SK-N-SH (cell line): ENCODE measurements at regions of chr1 and their contacts with region 1.

Region 1: GRCh38 chr1:203486618-203487370 is 7.2 kb upstream of the OPTC start:
- DNase-seq: no peak
- H3K4me3 ChIP-seq: no peak overlapping the region; a peak in 1 of 4 replicates
- H3K27ac ChIP-seq: peak overlapping the region in 1 of 2 experiments; percentile 83; a peak in 2 of 4 replicates
- H3K4me1 ChIP-seq: peaks cover 0 to 11% of the 10 kb centered on the region in 2 experiments; a peak in 1 of 4 replicates
- H3K27me3 ChIP-seq: no peaks in the 10 kb centered on the region
- CTCF ChIP-seq: no peak
- EP300 ChIP-seq: no peak
- RAD21 ChIP-seq: no peak

Region 2: DNA sequence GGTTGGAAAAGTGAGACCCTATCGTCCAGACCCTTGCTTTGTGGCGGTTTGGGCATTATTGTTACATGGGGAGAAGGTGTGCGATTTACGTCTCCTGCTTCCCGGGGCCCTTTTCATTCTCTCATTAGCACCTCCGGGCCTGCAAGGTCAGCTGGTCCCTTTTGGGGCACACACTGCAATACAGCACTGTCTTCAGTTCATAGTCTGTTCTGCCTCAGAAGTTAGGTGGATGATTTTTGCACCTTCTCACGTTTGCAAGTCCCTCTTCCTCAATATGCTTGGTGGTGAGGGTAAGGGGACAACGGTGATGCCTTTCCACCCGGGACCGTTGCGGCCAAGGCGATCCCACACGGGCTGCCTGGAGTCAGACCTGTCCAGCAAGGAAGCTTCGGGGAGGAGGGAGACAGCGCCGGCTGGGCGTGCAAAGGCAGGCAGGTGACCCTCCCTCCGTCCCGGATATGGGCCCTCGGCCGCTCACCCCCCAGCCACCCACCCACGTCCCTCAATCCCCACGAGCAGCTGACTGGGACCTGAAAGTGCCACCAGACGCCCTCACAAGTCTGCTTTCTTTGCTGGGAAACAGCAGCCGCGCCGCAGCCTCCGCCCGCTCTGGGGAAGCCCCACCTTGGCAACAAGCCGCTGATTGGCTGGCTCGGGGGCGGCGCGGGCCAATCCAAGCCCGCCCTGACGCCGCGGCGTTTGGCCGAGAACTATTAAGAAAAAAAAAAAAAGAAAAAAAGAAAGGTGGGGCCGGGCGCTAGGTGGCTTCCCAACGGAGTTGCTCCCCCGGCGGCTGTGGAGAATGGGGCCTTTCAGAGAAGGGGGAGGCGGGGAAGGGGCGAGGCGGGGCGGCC is 159.7 kb before region 1 on chr1:
- CTCF ChIA-PET with region 1: interaction called, 18 read pairs
- POLR2A ChIA-PET with region 1: no interaction called
- DNase-seq: peak; percentile 97
- H3K4me3 ChIP-seq: peak overlapping the region; percentile 51 to 71
- H3K27ac ChIP-seq: peak overlapping the region in 1 of 2 experiments; percentile 96; a peak in 2 of 4 replicates
- H3K4me1 ChIP-seq: peaks cover 5 to 43% of the 10 kb centered on the region in 2 experiments; a peak in 2 of 4 replicates
- H3K27me3 ChIP-seq: peaks cover 26% of the 10 kb centered on the region
- CTCF ChIP-seq: no peak
- EP300 ChIP-seq: peak; percentile 29 to 92; a peak in 3 of 4 replicates
- RAD21 ChIP-seq: no peak

Region 3: GRCh38 chr1:203451836-203452784 is 34.7 kb before region 1 on chr1:
- CTCF ChIA-PET with region 1: no interaction called
- POLR2A ChIA-PET with region 1: no interaction called
- DNase-seq: peak; percentile 48
- H3K4me3 ChIP-seq: no peak overlapping the region
- H3K27ac ChIP-seq: no peak overlapping the region
- H3K4me1 ChIP-seq: peaks cover 0 to 16% of the 10 kb centered on the region in 2 experiments; a peak in 3 of 4 replicates
- H3K27me3 ChIP-seq: peaks cover 8% of the 10 kb centered on the region; the same call in 1 of the 2 replicates
- CTCF ChIP-seq: no peak
- EP300 ChIP-seq: no peak
- RAD21 ChIP-seq: no peak

Region 4: GRCh38 chr1:203465948-203466347 is 20.8 kb before region 1 on chr1:
- CTCF ChIA-PET with region 1: interaction called, 10 read pairs
- POLR2A ChIA-PET with region 1: no interaction called
- DNase-seq: no peak
- H3K4me3 ChIP-seq: no peak overlapping the region
- H3K27ac ChIP-seq: no peak overlapping the region
- H3K4me1 ChIP-seq: peaks cover 3 to 8% of the 10 kb centered on the region in 2 experiments; a peak in 2 of 4 replicates
- H3K27me3 ChIP-seq: no peaks in the 10 kb centered on the region
- CTCF ChIP-seq: no peak
- EP300 ChIP-seq: no peak
- RAD21 ChIP-seq: no peak

Region 5: DNA sequence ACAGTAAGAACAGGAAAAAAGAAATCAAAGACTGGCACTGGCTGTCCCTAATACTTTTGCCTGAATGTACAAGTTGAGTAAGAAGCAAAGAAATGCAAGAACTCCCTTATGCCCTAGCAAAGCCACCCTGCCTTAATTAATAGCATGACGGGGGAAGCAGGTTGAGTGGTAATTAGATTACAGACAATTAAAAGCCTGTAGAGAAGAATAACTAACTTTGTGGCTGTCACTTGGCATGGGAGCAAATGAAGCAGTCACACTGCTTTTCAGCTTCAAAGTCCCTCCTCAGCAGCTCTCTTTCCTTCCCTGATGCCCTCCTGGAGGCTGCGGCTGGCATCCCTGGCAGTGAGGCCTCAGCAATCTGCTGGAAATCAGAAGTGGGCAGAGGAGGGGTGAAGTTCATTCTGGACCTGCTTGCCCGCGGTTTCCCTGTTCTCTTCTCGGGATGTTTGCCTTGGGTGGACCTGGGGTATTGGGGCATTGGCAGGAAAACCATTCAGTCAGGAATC is 10.5 kb after region 1 on chr1:
- CTCF ChIA-PET with region 1: interaction called, 23 read pairs
- POLR2A ChIA-PET with region 1: no interaction called
- DNase-seq: no peak
- H3K4me3 ChIP-seq: no peak overlapping the region
- H3K27ac ChIP-seq: no peak overlapping the region
- H3K4me1 ChIP-seq: peaks cover 0 to 8% of the 10 kb centered on the region in 2 experiments; a peak in 1 of 4 replicates
- H3K27me3 ChIP-seq: no peaks in the 10 kb centered on the region
- CTCF ChIP-seq: no peak
- EP300 ChIP-seq: no peak
- RAD21 ChIP-seq: no peak